ENCODE measurements at regions of chr6 and their contacts with region 1.

Region 1: DNA sequence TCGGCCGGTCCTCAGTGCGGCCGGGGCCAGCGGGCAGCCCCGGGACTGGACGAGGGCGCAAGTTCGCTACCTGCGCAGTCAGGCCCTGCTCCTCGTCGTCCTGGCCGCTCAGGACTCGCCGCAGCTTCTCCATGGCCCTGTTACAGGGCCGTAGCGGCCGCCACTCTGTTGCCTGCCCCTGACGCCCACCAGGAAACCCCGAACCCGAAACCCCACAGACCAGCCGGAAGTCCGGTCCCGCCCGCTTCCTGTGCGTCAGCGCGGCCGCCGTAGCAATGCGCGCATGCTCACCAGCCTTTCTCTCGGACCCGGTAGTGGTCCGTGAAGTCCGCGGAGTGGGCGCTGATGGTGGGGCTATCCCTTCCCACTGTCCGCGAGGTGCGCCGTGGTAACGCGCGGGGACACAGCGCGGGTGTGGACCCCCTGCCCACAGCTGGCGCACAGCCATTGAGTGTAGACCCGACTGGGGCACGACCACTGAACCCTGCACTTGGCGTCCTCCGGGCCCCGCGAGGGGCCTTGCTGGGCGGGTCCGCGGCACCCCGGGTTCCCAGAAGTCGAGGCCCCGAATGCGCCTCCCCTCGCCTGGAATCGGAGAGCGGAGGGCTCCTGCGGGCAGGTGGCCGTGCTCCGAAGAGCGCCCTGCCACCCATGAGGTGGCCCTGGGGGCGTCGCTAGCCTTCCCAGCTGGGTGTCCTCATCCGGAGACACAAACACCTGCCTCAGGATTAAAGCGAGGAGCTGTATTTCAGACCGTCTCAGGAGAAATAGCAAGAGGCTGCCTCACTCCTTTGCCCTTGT is at the start of gene SFT2D1:
- DNase-seq: peak; percentile 87 to 92
- ATAC-seq: peak; percentile 97
- total RNA-seq, gene SFT2D1: 57.7 to 64.7 TPM

Region 2: GRCh38 chr6:166387642-166388289 is 45.2 kb after region 1 on chr6:
- intact Hi-C with region 1: loop called in 1 of 2 experiments (anchors 5 kb)
- DNase-seq: no peak
- ATAC-seq: no peak

Measured in left colon (tissue), 2 donors.